HCT116 (cell line): ENCODE measurements at regions of chr1 and their contacts with region 1.

Region 1: GRCh38 chr1:36149237-36149972 is at the start of gene TRAPPC3:
- DNase-seq: peak; percentile 99
- ATAC-seq: peak; percentile 89
- H3K4me3 ChIP-seq: peak within 1 kb of the TSS; percentile 75 to 88
- H3K27ac ChIP-seq: peak within 1 kb of the TSS; percentile 65
- H3K4me1 ChIP-seq: peaks cover 22 to 35% of the 10 kb centered on the region in 2 experiments
- H3K27me3 ChIP-seq: no peaks in the 10 kb centered on the region
- CTCF ChIP-seq: peak in 2 of 3 experiments; percentile 97; a peak in 4 of 6 replicates
- POLR2A ChIP-seq: peak; percentile 62
- RAD21 ChIP-seq: no peak
- total RNA-seq, gene TRAPPC3: 64.6 TPM

Region 2: GRCh38 chr1:36115200-36115669 is 34.2 kb before region 1 on chr1:
- CTCF ChIA-PET with region 1: no interaction called
- POLR2A ChIA-PET with region 1: no interaction called
- RAD21 ChIA-PET with region 1: no interaction called
- intact Hi-C with region 1: no loop called
- DNase-seq: no peak
- ATAC-seq: no peak
- H3K4me3 ChIP-seq: no peak overlapping the region
- H3K27ac ChIP-seq: no peak overlapping the region
- H3K4me1 ChIP-seq: no peaks in the 10 kb centered on the region
- H3K27me3 ChIP-seq: no peaks in the 10 kb centered on the region
- CTCF ChIP-seq: no peak
- POLR2A ChIP-seq: no peak
- RAD21 ChIP-seq: no peak

Region 3: GRCh38 chr1:36134505-36135329 is 14.7 kb before region 1 on chr1:
- CTCF ChIA-PET with region 1: interaction called, 17 read pairs
- POLR2A ChIA-PET with region 1: interaction called, 11 read pairs
- RAD21 ChIA-PET with region 1: interaction called in 1 of 2 experiments, 5 read pairs
- intact Hi-C with region 1: no loop called
- DNase-seq: no peak
- ATAC-seq: peak; percentile 91
- H3K4me3 ChIP-seq: no peak overlapping the region
- H3K27ac ChIP-seq: no peak overlapping the region
- H3K4me1 ChIP-seq: peaks cover 0 to 18% of the 10 kb centered on the region in 2 experiments; a peak in 2 of 4 replicates
- H3K27me3 ChIP-seq: no peaks in the 10 kb centered on the region
- CTCF ChIP-seq: peak; percentile 77 to 81 (median 81); a peak in 5 of 6 replicates
- POLR2A ChIP-seq: no peak
- RAD21 ChIP-seq: peak; percentile 81

Region 4: DNA sequence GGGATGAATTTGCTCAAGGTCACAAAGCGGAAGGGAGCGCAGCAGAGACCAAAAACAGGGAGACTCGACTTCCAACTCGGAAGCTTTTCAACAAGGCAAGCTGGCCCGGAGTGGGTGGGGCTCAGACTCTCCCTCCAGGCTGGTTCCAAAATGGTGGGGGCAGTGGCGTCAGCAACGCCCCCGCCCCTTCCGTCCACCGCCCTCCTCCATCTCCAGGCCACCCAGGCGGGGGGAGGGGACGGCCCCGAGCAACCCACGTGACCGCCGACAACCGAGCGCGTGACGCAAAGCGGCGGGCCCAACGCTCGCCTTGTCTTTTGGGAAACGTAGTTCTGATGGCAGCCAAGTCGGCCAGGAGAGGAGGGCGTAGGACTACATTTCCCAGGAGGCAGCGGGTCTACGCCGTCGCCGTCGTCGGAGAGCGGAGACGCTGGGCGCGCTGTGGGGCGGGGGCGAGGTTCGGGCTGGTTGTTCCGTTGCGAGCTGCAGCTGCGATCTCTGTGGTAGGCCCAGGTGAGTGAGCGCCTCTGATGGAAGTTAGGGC is 74.7 kb after region 1 on chr1 and contains the start of gene THRAP3:
- CTCF ChIA-PET with region 1: interaction called, 14 read pairs
- POLR2A ChIA-PET with region 1: no interaction called
- RAD21 ChIA-PET with region 1: interaction called in 1 of 2 experiments, 7 read pairs
- intact Hi-C with region 1: loop called (anchors 1 kb)
- DNase-seq: peak; percentile 98
- ATAC-seq: peak; percentile 96
- H3K4me3 ChIP-seq: peak within 1 kb of the TSS; percentile 90 to 93
- H3K27ac ChIP-seq: peak within 1 kb of the TSS; percentile 85
- H3K4me1 ChIP-seq: peaks cover 3 to 37% of the 10 kb centered on the region in 2 experiments; a peak in 3 of 4 replicates
- H3K27me3 ChIP-seq: no peaks in the 10 kb centered on the region
- CTCF ChIP-seq: no peak
- POLR2A ChIP-seq: peak; percentile 65
- RAD21 ChIP-seq: no peak
- total RNA-seq, gene THRAP3: 144 TPM

Region 5: GRCh38 chr1:36300526-36300925 is 151.1 kb after region 1 on chr1:
- CTCF ChIA-PET with region 1: interaction called, 10 read pairs
- POLR2A ChIA-PET with region 1: interaction called, 5 read pairs
- RAD21 ChIA-PET with region 1: interaction called in 1 of 2 experiments, 3 read pairs
- intact Hi-C with region 1: no loop called
- DNase-seq: no peak
- ATAC-seq: no peak
- H3K4me3 ChIP-seq: no peak overlapping the region
- H3K27ac ChIP-seq: peak overlapping the region; percentile 47; the same call in 1 of the 2 replicates
- H3K4me1 ChIP-seq: peaks cover 11 to 33% of the 10 kb centered on the region in 2 experiments
- H3K27me3 ChIP-seq: no peaks in the 10 kb centered on the region
- CTCF ChIP-seq: no peak
- POLR2A ChIP-seq: no peak
- RAD21 ChIP-seq: no peak

Region 6: GRCh38 chr1:36420836-36421664 is 271.6 kb after region 1 on chr1:
- CTCF ChIA-PET with region 1: no interaction called
- POLR2A ChIA-PET with region 1: no interaction called
- RAD21 ChIA-PET with region 1: no interaction called
- intact Hi-C with region 1: loop called (anchors 5 kb)
- DNase-seq: peak; percentile 69
- ATAC-seq: peak; percentile 92
- H3K4me3 ChIP-seq: no peak overlapping the region
- H3K27ac ChIP-seq: no peak overlapping the region
- H3K4me1 ChIP-seq: peaks cover 6 to 27% of the 10 kb centered on the region in 2 experiments; a peak in 3 of 4 replicates
- H3K27me3 ChIP-seq: no peaks in the 10 kb centered on the region
- CTCF ChIP-seq: peak; percentile 89 to 94 (median 93)
- POLR2A ChIP-seq: no peak
- RAD21 ChIP-seq: peak; percentile 98